Activated CD4-positive, alpha-beta T cell treated with anti-CD3 and anti-CD28 coated beads for 36 hours (primary cell): ENCODE measurements at regions of chr9 and their contacts with region 1.

Region 1: DNA sequence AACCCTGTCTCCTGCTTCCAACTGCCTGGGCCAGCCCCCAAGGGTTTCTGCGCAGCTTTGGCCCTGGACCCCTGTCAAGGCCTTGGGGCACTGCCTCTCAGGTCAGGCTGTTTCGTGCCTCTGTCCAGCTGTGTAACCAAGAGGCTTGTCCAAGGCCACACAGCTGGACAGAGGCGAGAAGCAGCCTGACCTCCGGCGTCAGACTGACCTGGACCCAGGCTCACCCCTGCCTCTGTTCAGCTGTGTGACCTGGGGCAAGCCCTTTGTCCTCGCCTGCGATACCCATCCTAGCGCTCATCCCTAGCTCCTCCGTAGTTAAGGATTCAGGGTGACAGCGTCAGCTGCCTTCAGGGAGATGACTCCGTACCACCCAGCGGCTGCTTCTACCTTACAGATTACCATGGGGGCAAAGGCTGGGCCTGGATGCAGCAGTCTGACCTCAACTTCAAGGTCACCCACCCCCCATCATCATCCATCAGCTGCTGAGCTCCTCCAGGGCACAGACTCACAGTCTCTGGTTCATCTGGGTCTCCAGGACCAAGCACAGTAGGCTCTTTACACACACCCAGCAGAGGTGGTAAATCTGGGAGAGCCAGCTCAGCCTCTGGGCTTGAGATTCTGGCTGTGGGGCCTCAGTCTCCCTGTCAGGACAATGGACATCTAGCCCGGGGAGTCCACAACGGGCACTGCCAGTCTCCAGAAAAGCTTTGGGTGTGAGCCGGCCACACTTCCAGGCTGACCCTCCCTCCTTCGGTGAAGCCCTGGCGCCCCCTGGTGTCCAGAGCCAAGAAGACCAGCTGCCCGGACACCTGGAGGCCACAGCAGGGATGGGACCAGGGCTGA is 7.9 kb downstream of the AK1 start:
- DNase-seq: peak; percentile 91
- ATAC-seq: peak; percentile 75
- H3K4me3 Mint-ChIP-seq: no peak overlapping the region
- H3K27ac Mint-ChIP-seq: no peak overlapping the region
- H3K4me1 Mint-ChIP-seq: peaks cover 16% of the 10 kb centered on the region
- H3K27me3 Mint-ChIP-seq: no peaks in the 10 kb centered on the region

Region 2: GRCh38 chr9:127503947-127504782 is 365.4 kb before region 1 on chr9:
- CTCF ChIA-PET with region 1: interaction called, 3 read pairs
- POLR2A ChIA-PET with region 1: no interaction called
- intact Hi-C with region 1: loop called (anchors 5 to 10 kb)
- DNase-seq: peak; percentile 89
- ATAC-seq: peak; percentile 90
- H3K4me3 Mint-ChIP-seq: no peak overlapping the region
- H3K27ac Mint-ChIP-seq: no peak overlapping the region
- H3K4me1 Mint-ChIP-seq: no peaks in the 10 kb centered on the region
- H3K27me3 Mint-ChIP-seq: no peaks in the 10 kb centered on the region

Region 3: DNA sequence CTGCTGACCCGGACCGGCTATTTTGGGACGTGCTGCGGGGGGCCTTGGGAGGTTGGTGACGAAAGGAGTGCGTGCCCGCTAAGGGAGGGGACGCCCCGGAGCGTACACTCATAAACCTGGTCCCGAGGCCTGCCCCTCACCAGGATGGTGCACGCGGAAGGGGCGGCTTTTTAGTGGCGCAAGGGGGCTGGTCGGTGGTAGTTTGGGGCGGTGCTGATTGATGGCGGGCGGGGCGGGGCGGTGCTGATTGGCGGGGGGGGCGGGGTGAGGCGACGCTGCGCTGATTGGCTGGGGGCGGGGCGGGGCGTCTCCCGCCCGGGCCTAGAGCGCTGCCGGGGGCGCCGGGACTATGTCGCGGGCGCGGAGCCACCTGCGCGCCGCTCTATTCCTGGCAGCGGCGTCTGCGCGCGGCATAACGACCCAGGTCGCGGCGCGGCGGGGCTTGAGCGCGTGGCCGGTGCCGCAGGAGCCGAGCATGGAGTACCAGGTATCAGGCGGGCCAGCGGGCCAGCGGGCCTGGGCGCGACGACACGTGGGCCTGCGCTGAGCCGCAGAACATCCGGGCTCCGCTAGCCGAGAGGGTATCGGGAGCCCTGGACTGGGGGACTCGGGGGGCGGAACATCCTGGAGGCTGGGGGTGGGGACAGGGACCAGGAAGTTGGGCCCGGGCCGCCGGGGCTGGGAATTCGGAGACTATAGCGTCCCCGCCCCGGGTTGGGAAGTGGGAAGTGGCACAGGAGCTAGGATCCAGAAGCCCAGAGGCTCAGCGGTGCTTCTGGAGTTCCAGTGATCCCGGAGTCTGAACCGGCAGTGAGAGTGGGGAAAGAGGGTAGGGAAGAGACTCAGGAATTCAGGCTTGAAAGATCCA is 66.7 kb before region 1 on chr9 and contains the start of gene FPGS:
- CTCF ChIA-PET with region 1: interaction called, 4 read pairs
- POLR2A ChIA-PET with region 1: no interaction called
- intact Hi-C with region 1: loop called in 1 of 2 experiments (anchors 2 kb)
- DNase-seq: peak; percentile 93
- ATAC-seq: peak; percentile 86
- H3K4me3 Mint-ChIP-seq: peak within 1 kb of the TSS; percentile 98
- H3K27ac Mint-ChIP-seq: peak within 1 kb of the TSS; percentile 95
- H3K4me1 Mint-ChIP-seq: peaks cover 26% of the 10 kb centered on the region
- H3K27me3 Mint-ChIP-seq: no peaks in the 10 kb centered on the region
- total RNA-seq, gene FPGS: 71.9 to 80.4 TPM